Endothelial cell of umbilical vein (primary cell): ENCODE measurements at regions of chr18 and their contacts with region 1.

Region 1: DNA sequence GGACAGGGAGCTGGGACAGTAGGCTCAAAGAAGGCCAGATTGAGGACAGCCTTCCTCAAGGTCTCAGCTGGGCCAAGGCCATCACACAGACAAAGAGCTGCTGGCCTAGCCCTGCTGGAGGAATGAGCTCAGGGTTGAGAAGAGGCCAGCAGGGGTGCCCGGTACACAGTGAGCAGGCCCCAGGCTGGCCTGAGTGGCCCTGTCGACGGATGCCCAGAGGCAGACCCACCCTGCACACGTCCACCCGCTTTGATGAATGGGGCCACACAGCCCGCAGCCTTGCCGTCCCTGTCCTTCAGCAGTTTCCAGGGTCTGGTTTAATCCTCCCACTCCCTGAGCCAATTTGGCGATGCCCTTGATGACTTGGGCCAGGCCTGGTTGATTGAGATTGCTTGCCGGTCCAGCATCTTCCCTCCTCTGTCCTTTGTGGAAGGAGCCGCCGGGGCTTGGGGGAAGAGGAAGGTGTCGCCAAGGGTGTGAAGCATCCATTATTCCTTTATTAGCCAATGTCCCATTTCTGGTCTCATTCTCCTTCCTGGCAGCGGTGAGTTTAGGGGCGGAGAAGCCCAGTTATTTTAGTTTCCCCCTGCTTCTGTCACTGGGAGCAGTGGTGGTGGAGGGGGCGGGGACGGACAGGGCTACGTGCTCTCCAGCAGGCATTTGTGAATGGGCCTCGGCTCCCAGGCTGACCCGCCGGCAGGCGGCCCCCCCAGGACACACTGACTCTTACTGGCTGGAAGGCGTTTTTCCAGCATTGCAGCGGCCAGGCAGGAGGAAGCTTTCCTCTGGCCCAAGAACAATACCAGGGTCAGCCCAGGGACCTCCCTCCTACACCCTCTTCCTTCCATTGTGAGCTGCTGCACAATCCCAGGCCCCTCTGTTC is 141.7 kb downstream of the CTIF start:
- DNase-seq: peak; percentile 96
- H3K4me3 ChIP-seq: no peak overlapping the region
- H3K27ac ChIP-seq: peak overlapping the region; percentile 42
- H3K4me1 ChIP-seq: peaks cover 17% of the 10 kb centered on the region
- H3K27me3 ChIP-seq: no peaks in the 10 kb centered on the region
- CTCF ChIP-seq: peak; percentile 26 to 67
- POLR2A ChIP-seq: no peak

Region 2: GRCh38 chr18:48590678-48591077 is 89.9 kb before region 1 on chr18:
- CTCF ChIA-PET with region 1: no interaction called
- POLR2A ChIA-PET with region 1: no interaction called
- dilution Hi-C with region 1: no loop called
- intact Hi-C with region 1: no loop called
- DNase-seq: no peak
- H3K4me3 ChIP-seq: no peak overlapping the region
- H3K27ac ChIP-seq: no peak overlapping the region
- H3K4me1 ChIP-seq: no peaks in the 10 kb centered on the region
- H3K27me3 ChIP-seq: no peaks in the 10 kb centered on the region
- CTCF ChIP-seq: no peak
- POLR2A ChIP-seq: no peak

Region 3: GRCh38 chr18:48711651-48712486 is 31.3 kb after region 1 on chr18:
- CTCF ChIA-PET with region 1: interaction called, 6 read pairs
- POLR2A ChIA-PET with region 1: no interaction called
- dilution Hi-C with region 1: no loop called
- intact Hi-C with region 1: loop called (anchors 1 kb)
- DNase-seq: peak; percentile 51
- H3K4me3 ChIP-seq: no peak overlapping the region
- H3K27ac ChIP-seq: no peak overlapping the region
- H3K4me1 ChIP-seq: peaks cover 35% of the 10 kb centered on the region
- H3K27me3 ChIP-seq: no peaks in the 10 kb centered on the region
- CTCF ChIP-seq: peak; percentile 45 to 56
- POLR2A ChIP-seq: no peak

Region 4: GRCh38 chr18:48834413-48835031 is 153.9 kb after region 1 on chr18:
- CTCF ChIA-PET with region 1: no interaction called
- POLR2A ChIA-PET with region 1: no interaction called
- dilution Hi-C with region 1: no loop called
- intact Hi-C with region 1: loop called (anchors 2 kb)
- DNase-seq: peak; percentile 90
- H3K4me3 ChIP-seq: no peak overlapping the region
- H3K27ac ChIP-seq: peak overlapping the region; percentile 30
- H3K4me1 ChIP-seq: peaks cover 36% of the 10 kb centered on the region
- H3K27me3 ChIP-seq: no peaks in the 10 kb centered on the region
- CTCF ChIP-seq: no peak
- POLR2A ChIP-seq: no peak

Region 5: DNA sequence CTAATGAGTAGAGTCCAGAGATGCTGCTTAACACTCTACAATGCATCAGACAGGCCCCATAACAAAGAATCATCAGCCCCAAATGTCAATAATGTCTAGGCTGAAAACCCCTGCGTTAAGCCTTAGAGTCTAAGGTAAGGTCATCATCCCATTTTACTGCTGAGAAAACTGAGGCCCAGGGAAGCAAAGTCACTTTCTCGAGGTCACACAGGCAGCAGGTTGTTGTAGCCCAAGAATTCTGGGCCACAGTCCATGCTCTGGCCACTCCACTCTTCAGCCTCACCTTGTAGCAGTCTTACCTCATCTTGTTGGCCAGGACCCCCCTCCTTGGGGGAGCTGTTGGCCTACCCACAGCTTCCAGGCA is 215.7 kb after region 1 on chr18:
- CTCF ChIA-PET with region 1: no interaction called
- POLR2A ChIA-PET with region 1: no interaction called
- dilution Hi-C with region 1: no loop called
- intact Hi-C with region 1: no loop called
- DNase-seq: no peak
- H3K4me3 ChIP-seq: no peak overlapping the region
- H3K27ac ChIP-seq: no peak overlapping the region
- H3K4me1 ChIP-seq: peaks cover 4% of the 10 kb centered on the region
- H3K27me3 ChIP-seq: no peaks in the 10 kb centered on the region
- CTCF ChIP-seq: no peak
- POLR2A ChIP-seq: no peak

Region 6: GRCh38 chr18:49041435-49042245 is 361.1 kb after region 1 on chr18:
- CTCF ChIA-PET with region 1: interaction called, 12 read pairs
- POLR2A ChIA-PET with region 1: no interaction called
- dilution Hi-C with region 1: no loop called
- intact Hi-C with region 1: loop called (anchors 1 kb)
- DNase-seq: peak; percentile 52
- H3K4me3 ChIP-seq: no peak overlapping the region
- H3K27ac ChIP-seq: no peak overlapping the region
- H3K4me1 ChIP-seq: no peaks in the 10 kb centered on the region
- H3K27me3 ChIP-seq: no peaks in the 10 kb centered on the region
- CTCF ChIP-seq: peak; percentile 45 to 53
- POLR2A ChIP-seq: no peak